Ascending aorta (tissue), 2 donors: ENCODE measurements at regions of chr1 and their contacts with region 1.

Region 1: GRCh38 chr1:22641906-22642636 is 1.4 kb upstream of the C1QC start:
- DNase-seq: peak in 1 of 2 donors; percentile 83
- H3K4me3 ChIP-seq: no peak overlapping the region
- H3K27ac ChIP-seq: no peak overlapping the region
- H3K4me1 ChIP-seq: no peaks in the 10 kb centered on the region
- H3K27me3 ChIP-seq: no peaks in the 10 kb centered on the region
- CTCF ChIP-seq: peak; percentile 83 to 94 (median 93)

Region 2: GRCh38 chr1:22420455-22421053 is 221.5 kb before region 1 on chr1:
- intact Hi-C with region 1: loop called (anchors 1 kb)
- DNase-seq: peak; percentile 37 to 86
- H3K4me3 ChIP-seq: no peak overlapping the region
- H3K27ac ChIP-seq: no peak overlapping the region
- H3K4me1 ChIP-seq: no peaks in the 10 kb centered on the region
- H3K27me3 ChIP-seq: no peaks in the 10 kb centered on the region
- CTCF ChIP-seq: peak; percentile 75 to 86 (median 81)

Region 3: DNA sequence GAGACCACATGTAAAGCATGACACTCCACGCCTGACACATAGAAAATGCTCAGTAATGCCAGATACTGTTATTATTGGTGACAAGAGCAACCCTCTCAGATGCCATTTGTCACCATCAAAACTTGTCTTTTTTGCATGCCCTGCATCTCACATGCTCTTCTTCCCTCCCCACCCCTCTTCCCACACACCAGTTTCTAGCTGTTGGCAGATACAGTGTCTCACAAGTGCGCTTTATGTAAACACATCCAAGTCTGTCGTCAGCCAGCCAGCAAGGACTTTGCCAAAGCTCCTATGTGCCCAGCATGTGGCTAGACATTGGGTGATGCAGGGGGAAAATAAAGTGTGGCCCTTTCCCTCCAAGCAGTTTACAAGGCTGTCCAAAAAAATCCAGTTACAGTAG is 123.7 kb before region 1 on chr1:
- intact Hi-C with region 1: no loop called
- DNase-seq: no peak
- H3K4me3 ChIP-seq: no peak overlapping the region
- H3K27ac ChIP-seq: peak overlapping the region in 1 of 2 donors; percentile 4
- H3K4me1 ChIP-seq: peaks cover 0 to 2% of the 10 kb centered on the region in 2 donors
- H3K27me3 ChIP-seq: no peaks in the 10 kb centered on the region
- CTCF ChIP-seq: no peak